ENCODE measurements at regions of chr12 and their contacts with region 1.

Region 1: DNA sequence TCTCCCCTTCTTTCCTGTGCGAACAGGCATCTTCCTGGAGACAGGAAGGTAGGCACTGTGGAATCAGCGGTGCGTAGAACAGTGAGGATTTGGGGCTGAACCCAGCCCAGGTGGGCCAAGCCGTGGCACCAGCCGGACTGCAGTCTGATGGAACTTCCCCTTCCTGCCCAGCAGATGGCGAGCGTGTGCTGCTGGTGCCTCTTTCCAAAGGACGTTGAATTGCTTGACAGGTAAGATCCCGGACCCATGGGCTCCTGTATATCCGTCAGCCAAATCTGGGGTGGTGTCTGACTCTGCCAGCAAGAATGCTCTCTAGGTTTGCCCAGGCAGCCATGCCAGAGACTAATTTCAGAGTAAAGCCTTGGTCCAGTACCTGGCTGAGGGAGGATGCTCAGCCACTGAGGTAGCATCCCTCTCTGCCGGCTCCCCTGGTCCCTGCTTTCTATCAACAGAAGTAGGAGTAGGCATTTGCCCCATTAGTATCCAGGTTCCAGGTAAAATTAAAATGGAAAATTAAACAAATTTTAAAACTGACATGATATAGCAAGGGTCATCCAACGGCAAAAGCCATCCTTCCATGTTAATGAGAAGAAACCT is 21.1 kb upstream of the KCNA5 start:
- H3K4me3 Mint-ChIP-seq: no peak overlapping the region
- H3K27ac Mint-ChIP-seq: no peak overlapping the region
- H3K4me1 Mint-ChIP-seq: no peaks in the 10 kb centered on the region
- H3K27me3 Mint-ChIP-seq: peaks cover 19% of the 10 kb centered on the region

Region 2: GRCh38 chr12:5083955-5084849 is 61.6 kb after region 1 on chr12:
- intact Hi-C with region 1: loop called (anchors 1 kb)
- H3K4me3 Mint-ChIP-seq: no peak overlapping the region
- H3K27ac Mint-ChIP-seq: no peak overlapping the region
- H3K4me1 Mint-ChIP-seq: no peaks in the 10 kb centered on the region
- H3K27me3 Mint-ChIP-seq: peaks cover 15% of the 10 kb centered on the region